T-cell (primary cell): ENCODE measurements at regions of chr6 and their contacts with region 1.

Region 1: DNA sequence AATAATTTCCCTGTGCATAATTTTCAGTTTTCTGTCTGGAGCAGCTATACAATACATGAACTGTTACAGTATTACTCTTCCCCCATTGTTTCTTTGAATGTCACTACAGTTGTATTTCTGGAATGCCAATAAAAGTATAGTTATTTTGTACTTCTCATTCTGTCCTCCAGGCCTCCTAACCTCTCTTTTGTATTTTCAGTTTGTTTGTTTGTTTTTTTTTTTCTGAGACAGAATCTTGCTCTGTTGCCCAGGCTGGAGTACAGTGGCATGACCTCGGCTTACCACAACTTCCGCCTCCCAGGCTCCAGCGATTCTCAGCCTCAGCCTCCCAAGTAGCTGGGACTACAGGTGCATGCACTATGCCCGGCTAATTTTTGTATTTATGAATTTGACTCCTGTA is 16.8 kb upstream of the ARID1B start:
- DNase-seq: no peak
- ATAC-seq: no peak
- H3K4me3 ChIP-seq: no peak overlapping the region
- H3K4me3 Mint-ChIP-seq: no peak overlapping the region
- H3K27ac ChIP-seq: no peak overlapping the region
- H3K27ac Mint-ChIP-seq: no peak overlapping the region
- H3K4me1 ChIP-seq: no peaks in the 10 kb centered on the region
- H3K4me1 Mint-ChIP-seq: no peaks in the 10 kb centered on the region
- H3K27me3 ChIP-seq: peaks cover 0 to 8% of the 10 kb centered on the region in 2 experiments
- H3K27me3 Mint-ChIP-seq: peaks cover 2 to 3% of the 10 kb centered on the region in 2 donors

Region 2: DNA sequence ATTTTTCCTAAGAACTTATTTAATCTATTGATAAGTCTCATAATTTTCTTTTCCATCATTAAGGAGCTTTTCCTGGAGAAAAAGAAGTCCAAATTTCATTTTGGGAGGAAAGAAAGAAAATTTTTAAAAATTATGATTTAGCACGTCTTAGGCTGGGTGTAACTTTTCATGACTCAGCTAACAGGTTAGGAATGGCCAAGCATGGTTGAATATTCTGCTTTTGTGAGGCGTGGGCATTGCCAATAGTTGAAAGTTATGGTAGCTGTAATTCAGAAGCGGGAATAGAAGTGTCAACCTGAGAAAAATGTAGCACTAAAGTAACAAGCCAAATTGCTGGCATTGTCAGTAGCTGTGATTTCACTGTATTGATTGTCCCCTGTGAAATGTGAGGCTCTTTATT is 60.4 kb before region 1 on chr6:
- CTCF ChIA-PET with region 1: no interaction called
- POLR2A ChIA-PET with region 1: interaction called in 1 of 2 experiments, 13 read pairs
- DNase-seq: no peak
- ATAC-seq: no peak
- H3K4me3 ChIP-seq: no peak overlapping the region
- H3K4me3 Mint-ChIP-seq: no peak overlapping the region
- H3K27ac ChIP-seq: no peak overlapping the region
- H3K27ac Mint-ChIP-seq: no peak overlapping the region
- H3K4me1 ChIP-seq: no peaks in the 10 kb centered on the region
- H3K4me1 Mint-ChIP-seq: peaks cover 0 to 7% (median 0%) of the 10 kb centered on the region in 3 donors
- H3K27me3 ChIP-seq: peaks cover 0 to 11% of the 10 kb centered on the region in 2 experiments
- H3K27me3 Mint-ChIP-seq: peaks cover 10% of the 10 kb centered on the region in 2 donors